Posterior vena cava (tissue), 2 donors: ENCODE measurements at regions of chr1 and their contacts with region 1.

Region 1: DNA sequence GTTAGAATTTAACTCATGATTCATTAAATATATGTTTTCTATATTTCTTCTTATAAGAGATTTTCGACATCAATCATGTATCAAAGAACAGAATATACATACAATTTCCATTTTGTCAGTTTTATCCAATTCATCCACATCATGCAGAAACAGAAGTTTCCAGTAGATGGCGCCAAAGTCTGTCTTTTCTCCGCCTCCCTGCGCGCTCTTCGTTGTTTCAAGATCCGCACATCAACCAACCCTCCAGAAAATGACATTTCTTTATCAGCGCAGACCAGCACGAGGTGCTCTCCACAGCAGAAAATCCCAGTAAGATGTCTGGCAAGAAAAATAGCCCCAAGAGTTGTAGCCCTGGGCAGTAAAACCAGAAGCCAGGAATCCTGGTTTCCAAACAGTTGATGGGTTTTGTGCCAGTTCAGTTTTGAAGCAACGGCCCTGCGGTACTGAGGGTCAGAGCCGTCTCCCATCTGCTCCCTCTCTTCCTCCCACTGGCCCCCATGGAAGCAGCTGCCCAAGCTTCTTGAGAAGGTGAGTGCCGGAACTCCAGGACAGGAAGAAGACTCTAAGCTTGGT is 38.6 kb upstream of the GPR137B start:
- DNase-seq: no peak

Region 2: GRCh38 chr1:236051242-236051791 is 52.4 kb before region 1 on chr1:
- intact Hi-C with region 1: no loop called
- DNase-seq: no peak

Region 3: GRCh38 chr1:236345728-236346127 is 242.0 kb after region 1 on chr1:
- intact Hi-C with region 1: no loop called
- DNase-seq: no peak

Region 4: DNA sequence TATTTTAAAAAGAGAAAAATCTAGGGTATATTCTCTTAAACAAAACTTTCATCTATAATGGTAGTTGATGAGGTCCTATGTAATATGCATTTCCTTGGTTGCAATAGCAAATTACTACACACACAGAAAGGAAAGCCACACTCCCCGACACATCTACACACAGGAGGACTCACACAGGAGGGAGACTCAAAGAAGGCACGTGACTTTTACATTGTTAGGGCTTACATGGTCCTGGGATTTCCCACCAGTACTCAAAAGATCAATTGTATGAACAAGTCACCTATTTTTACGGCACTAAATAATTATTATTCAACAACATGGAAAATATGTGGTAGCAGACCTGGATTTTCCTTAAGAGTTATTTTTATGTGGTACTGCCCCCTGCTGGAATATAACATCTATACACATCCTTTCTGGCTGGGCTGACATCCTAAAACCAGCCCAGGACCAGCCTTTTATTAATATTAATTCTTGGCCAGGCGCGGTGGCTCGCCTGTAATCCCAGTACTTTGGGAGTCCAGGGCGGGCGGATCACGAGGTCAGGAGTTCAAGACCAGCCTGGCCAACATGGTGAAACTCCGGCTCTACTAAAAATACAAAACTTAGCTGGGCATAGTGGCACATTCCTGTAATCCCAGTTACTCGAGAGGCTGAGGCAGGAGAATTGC is 386.1 kb after region 1 on chr1:
- intact Hi-C with region 1: loop called (anchors 2 to 5 kb)
- DNase-seq: no peak

Region 5: DNA sequence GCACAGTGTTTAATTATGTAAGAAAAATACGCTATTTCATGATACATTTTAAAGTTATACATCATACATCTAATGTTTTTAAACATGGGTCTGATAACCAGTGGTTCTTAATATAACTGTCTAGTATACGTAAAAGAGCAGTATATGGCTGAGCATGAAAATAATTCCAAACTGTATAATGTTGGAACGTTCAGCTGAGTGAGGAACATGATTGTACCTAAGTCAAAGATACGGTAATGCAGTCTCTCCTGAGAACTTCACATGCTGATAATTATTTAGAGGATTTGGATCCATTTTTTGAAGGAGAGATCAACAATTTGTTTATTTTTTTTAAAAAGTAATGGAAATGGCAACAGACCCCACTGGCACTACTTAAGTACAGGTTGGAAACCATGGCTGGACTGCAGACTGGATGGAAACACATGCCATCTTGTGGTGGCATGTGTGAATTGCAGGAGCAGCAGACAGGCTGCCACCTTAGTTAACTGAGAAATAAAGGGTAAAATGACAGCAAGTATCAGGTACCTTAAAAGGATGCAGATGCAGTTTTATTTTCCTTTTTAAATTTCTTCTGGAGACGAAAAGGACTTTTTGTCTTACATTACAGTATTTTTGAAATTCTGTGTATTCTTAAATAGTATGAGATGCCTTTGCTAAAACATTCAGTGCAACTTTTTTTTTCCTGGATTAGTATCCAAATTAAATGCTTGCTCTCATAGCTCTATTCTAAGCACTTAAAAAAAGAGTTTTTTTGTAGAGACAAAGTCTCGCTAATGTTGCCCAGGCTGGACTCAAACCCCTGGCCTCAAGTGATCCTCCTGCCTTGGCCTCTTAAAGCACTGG is 765.1 kb after region 1 on chr1:
- intact Hi-C with region 1: loop called in 1 of 2 experiments (anchors 10 kb)
- DNase-seq: no peak